Right ventricle myocardium inferior (tissue), 1 donor: ENCODE measurements at regions of chr11 and their contacts with region 1.

Region 1: GRCh38 chr11:60831143-60831500 is 10.8 kb upstream of the CCDC86 start:
- DNase-seq: peak; percentile 91
- ATAC-seq: peak; percentile 86

Region 2: GRCh38 chr11:60786811-60787567 is 44.1 kb before region 1 on chr11:
- intact Hi-C with region 1: no loop called
- DNase-seq: peak; percentile 86
- ATAC-seq: peak; percentile 73

Region 3: DNA sequence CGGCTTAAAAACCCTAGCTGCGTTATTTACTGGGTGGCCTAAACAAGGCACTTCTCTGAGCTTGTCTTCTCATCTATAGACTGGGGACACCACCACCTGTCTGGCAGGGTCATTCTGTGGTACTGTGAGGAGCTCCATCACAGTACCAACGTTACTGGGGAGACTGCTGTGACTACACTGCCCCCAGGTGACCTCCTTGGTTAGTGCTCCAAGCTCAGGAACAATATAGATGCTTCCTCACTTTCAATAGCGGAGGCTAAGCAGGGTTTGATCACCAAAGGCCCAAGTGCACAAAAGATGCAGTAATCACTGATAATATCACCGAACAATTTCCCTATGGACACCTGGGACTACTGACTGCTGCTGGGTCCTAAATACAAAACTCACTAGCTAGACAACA is 56.4 kb after region 1 on chr11:
- intact Hi-C with region 1: loop called (anchors 1 kb)
- DNase-seq: no peak
- ATAC-seq: peak; percentile 77

Region 4: GRCh38 chr11:60899046-60899936 is 68.2 kb after region 1 on chr11:
- intact Hi-C with region 1: loop called (anchors 1 kb)
- DNase-seq: no peak
- ATAC-seq: peak; percentile 66

Region 5: GRCh38 chr11:61129639-61130523 is 298.8 kb after region 1 on chr11:
- intact Hi-C with region 1: loop called (anchors 5 kb)
- DNase-seq: peak; percentile 91
- ATAC-seq: peak; percentile 81

Region 6: GRCh38 chr11:61187505-61188130 is 356.5 kb after region 1 on chr11:
- intact Hi-C with region 1: loop called (anchors 2 kb)
- DNase-seq: peak; percentile 77
- ATAC-seq: peak; percentile 72